ENCODE measurements at regions of chr18 and their contacts with region 1.

Region 1: DNA sequence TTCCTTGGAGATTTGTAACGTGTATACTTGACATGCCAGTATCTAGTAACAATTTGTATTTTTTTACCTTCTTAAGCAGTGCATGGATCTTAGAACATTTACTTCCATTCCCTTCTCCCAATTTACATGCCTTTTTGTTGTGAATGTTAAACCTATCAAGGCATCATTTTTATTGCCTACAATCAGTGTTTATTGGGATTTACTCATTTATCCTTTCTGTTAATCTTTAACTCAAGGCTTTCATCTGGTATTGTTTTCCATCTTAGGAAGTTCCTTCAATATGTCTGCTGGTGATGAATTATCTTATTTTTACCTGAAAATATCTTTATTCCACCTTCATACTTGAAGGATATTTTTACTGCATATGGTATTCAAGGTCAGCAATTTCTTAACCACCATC is 88.5 kb upstream of the EMILIN2 start:
- DNase-seq: no peak
- ATAC-seq: no peak
- H3K4me3 ChIP-seq: no peak overlapping the region
- H3K27ac ChIP-seq: no peak overlapping the region
- H3K4me1 ChIP-seq: no peaks in the 10 kb centered on the region
- H3K27me3 ChIP-seq: no peaks in the 10 kb centered on the region
- CTCF ChIP-seq: no peak
- POLR2A ChIP-seq: no peak

Region 2: DNA sequence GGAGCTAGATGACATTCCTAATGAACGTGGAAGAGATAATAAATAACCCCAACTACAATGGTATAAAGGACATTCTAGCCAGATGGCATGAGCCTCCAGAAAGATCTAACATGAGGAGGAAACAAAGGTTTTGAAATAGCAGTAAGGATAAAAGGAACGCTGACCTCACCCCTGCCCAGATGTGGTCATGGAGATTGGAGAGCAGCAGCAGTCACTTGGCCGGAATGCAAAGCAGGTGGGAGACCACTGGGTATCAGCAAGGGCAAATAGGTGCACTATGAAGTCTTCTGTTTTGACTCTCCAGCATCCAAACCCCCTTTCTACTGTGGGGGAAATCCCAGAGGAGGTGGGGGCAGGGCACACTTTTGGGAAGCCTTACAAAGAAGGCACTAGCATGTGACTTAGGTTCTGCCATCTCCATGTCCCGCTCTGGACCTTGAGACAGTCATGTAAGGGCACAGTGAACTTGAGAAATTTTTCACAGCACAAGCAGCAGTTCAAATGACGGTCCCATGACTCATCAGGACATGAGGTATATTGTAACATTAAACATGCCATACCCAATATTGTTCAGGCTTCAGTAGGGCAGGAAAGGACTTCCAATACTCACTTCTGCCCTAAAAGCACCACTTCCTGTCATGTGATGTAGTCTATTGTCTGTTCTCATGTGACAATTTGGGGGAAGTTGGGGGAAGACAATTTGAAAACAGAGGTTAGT is 242.2 kb before region 1 on chr18:
- intact Hi-C with region 1: no loop called
- DNase-seq: no peak
- ATAC-seq: peak in 3 of 4 donors; percentile 34 to 57 (median 41)
- H3K4me3 ChIP-seq: no peak overlapping the region
- H3K27ac ChIP-seq: peak overlapping the region in 2 of 12 donors; percentile 14 to 54
- H3K4me1 ChIP-seq: peaks cover 0 to 20% (median 3%) of the 10 kb centered on the region in 12 donors
- H3K27me3 ChIP-seq: no peaks in the 10 kb centered on the region
- CTCF ChIP-seq: no peak
- POLR2A ChIP-seq: no peak

Region 3: GRCh38 chr18:2706903-2707302 is 51.4 kb before region 1 on chr18:
- intact Hi-C with region 1: loop called in 1 of 10 experiments (anchors 10 kb)
- DNase-seq: no peak
- ATAC-seq: no peak
- H3K4me3 ChIP-seq: no peak overlapping the region
- H3K27ac ChIP-seq: no peak overlapping the region
- H3K4me1 ChIP-seq: no peaks in the 10 kb centered on the region
- H3K27me3 ChIP-seq: no peaks in the 10 kb centered on the region
- CTCF ChIP-seq: no peak
- POLR2A ChIP-seq: no peak

Region 4: GRCh38 chr18:2723207-2723606 is 35.1 kb before region 1 on chr18:
- intact Hi-C with region 1: loop called in 1 of 10 experiments (anchors 1 kb)
- DNase-seq: no peak
- ATAC-seq: peak in 2 of 4 donors; percentile 16 to 20
- H3K4me3 ChIP-seq: no peak overlapping the region
- H3K27ac ChIP-seq: no peak overlapping the region
- H3K4me1 ChIP-seq: peaks cover 0 to 14% (median 0%) of the 10 kb centered on the region in 12 donors
- H3K27me3 ChIP-seq: no peaks in the 10 kb centered on the region
- CTCF ChIP-seq: no peak
- POLR2A ChIP-seq: no peak

Region 5: GRCh38 chr18:2917259-2918047 is 159.1 kb after region 1 on chr18:
- intact Hi-C with region 1: loop called in 1 of 10 experiments (anchors 10 kb)
- DNase-seq: no peak
- ATAC-seq: no peak
- H3K4me3 ChIP-seq: no peak overlapping the region
- H3K27ac ChIP-seq: peak overlapping the region in 1 of 12 donors; percentile 19
- H3K4me1 ChIP-seq: peaks cover 0 to 23% (median 1%) of the 10 kb centered on the region in 12 donors
- H3K27me3 ChIP-seq: no peaks in the 10 kb centered on the region
- CTCF ChIP-seq: no peak
- POLR2A ChIP-seq: no peak

Measured in heart left ventricle (tissue), 16 donors.